ENCODE measurements at regions of chr11 and their contacts with region 1.

Region 1: GRCh38 chr11:57885298-57886050 is 123.9 kb downstream of the CTNND1 start:
- DNase-seq: no peak
- ATAC-seq: no peak
- H3K4me3 ChIP-seq: no peak overlapping the region
- H3K4me3 Mint-ChIP-seq: no peak overlapping the region
- H3K27ac ChIP-seq: no peak overlapping the region
- H3K27ac Mint-ChIP-seq: no peak overlapping the region
- H3K4me1 ChIP-seq: no peaks in the 10 kb centered on the region
- H3K4me1 Mint-ChIP-seq: peaks cover 0 to 6% (median 4%) of the 10 kb centered on the region in 3 donors
- H3K27me3 ChIP-seq: peaks cover 0 to 6% of the 10 kb centered on the region in 2 experiments
- H3K27me3 Mint-ChIP-seq: peaks cover 2 to 4% of the 10 kb centered on the region in 2 donors

Region 2: GRCh38 chr11:57741132-57742086 is 144.1 kb before region 1 on chr11 and contains the start of gene SELENOH:
- CTCF ChIA-PET with region 1: no interaction called
- POLR2A ChIA-PET with region 1: interaction called in 1 of 2 experiments, 11 read pairs
- DNase-seq: peak; percentile 84 to 94 (median 88)
- ATAC-seq: peak; percentile 83 to 88 (median 86)
- H3K4me3 ChIP-seq: peak within 1 kb of the TSS; percentile 73 to 74
- H3K4me3 Mint-ChIP-seq: peak within 1 kb of the TSS; percentile 93 to 99 (median 96)
- H3K27ac ChIP-seq: peak within 1 kb of the TSS; percentile 86
- H3K27ac Mint-ChIP-seq: peak within 1 kb of the TSS; percentile 97 to 99
- H3K4me1 ChIP-seq: peaks cover 9 to 28% of the 10 kb centered on the region in 2 experiments
- H3K4me1 Mint-ChIP-seq: peaks cover 40 to 43% (median 42%) of the 10 kb centered on the region in 3 donors
- H3K27me3 ChIP-seq: no peaks in the 10 kb centered on the region
- H3K27me3 Mint-ChIP-seq: no peaks in the 10 kb centered on the region
- total RNA-seq, gene SELENOH: 88.5 to 155 (median 113) TPM